Activated T-helper 2 cell treated with anti-CD3 and anti-CD28 coated beads, Interferon-gamma antibody, Interleukin-2, Interleukin-4, amounts not matched to agents 10 μg/mL and 5 μg/mL and 100 μg/mL, durations not matched to agents 14 hours and 24 hours and 36 hours (primary cell): ENCODE measurements at regions of chrX and their contacts with region 1.

Region 1: DNA sequence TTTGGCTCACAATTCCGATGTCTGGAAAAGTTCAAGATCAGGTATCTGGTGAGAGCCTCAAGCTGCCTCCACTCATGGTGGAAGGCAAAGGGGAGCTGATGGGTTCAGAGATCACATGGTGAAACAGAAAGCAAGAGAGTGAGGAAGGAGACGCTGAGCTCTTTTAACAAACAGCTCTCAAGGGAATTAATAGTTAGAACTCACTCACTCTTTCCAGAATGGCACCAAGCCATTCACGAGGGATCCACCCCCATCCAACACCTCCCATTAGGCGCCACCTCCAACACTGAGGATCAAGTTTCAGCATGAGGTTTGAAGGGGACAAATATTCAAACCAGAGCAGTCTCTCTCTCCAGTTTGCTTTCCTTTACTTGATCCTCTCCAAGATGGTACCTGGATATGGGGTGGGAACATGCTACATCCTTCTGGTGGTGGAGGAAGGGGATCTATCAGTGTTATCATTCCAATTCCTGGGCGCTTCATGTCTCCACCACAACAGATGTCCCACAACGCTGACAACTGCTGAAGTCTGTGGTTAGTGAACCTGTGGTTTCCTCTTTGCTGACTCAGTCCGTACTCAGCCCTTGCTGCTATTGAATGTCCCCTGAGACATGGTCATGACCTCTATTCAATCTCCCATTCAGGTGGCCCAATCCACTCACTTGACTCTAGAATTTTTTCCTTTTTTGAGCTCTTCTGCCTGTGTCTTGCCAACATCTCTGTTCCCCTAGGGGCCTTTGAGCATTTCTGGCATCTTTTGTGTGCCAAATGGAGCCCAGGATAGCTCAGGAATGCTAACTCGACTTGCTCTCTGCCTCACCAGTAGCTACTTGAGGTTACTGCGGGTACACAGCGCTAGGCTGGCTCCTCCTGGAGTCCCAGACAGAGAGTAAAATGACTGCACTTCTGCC is 395.2 kb downstream of the MID1IP1 start:
- DNase-seq: peak; percentile 60
- H3K4me3 Mint-ChIP-seq: peak overlapping the region; percentile 44
- H3K27ac Mint-ChIP-seq: peak overlapping the region; percentile 92
- H3K4me1 Mint-ChIP-seq: peaks cover 69% of the 10 kb centered on the region
- H3K27me3 Mint-ChIP-seq: no peaks in the 10 kb centered on the region

Region 2: DNA sequence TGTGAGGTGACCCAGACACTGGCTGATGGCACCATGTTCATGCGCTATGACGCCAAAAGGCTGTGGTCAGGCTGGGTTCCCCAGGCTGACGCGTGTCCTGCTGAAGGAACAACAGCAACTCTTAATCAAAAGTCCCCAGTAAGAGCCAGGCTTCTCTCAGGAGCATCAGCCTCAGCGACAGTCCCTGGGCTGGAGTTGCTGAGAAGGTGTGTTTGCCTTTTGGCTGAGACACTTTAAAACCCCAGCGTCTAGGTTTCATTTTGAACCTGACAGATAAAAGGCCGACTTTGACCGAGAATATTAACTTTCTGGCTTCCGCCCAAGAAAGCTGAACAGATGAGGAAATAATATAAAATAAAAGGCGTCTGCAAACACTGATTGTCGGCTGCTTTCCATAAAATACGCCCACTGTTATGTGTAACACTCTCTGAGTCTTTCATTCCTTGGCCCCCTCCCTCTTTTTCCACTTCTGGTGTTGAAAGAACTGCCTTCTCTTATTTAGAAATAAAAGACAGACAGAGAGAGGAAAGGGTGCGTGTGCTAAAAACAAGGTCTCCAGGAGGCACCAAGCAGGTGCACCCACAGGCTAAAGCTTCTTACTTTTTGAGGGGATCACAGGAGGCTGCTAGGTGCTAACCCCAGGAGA is 21.6 kb before region 1 on chrX:
- intact Hi-C with region 1: loop called (anchors 2 kb)
- DNase-seq: no peak
- H3K4me3 Mint-ChIP-seq: peak overlapping the region; percentile 44
- H3K27ac Mint-ChIP-seq: peak overlapping the region; percentile 90
- H3K4me1 Mint-ChIP-seq: peaks cover 46% of the 10 kb centered on the region
- H3K27me3 Mint-ChIP-seq: no peaks in the 10 kb centered on the region

Region 3: GRCh38 chrX:39212456-39212855 is 16.0 kb after region 1 on chrX:
- intact Hi-C with region 1: no loop called
- DNase-seq: no peak
- H3K4me3 Mint-ChIP-seq: no peak overlapping the region
- H3K27ac Mint-ChIP-seq: peak overlapping the region; percentile 17
- H3K4me1 Mint-ChIP-seq: peaks cover 5% of the 10 kb centered on the region
- H3K27me3 Mint-ChIP-seq: no peaks in the 10 kb centered on the region

Region 4: GRCh38 chrX:39381422-39381821 is 185.0 kb after region 1 on chrX:
- intact Hi-C with region 1: no loop called
- DNase-seq: no peak
- H3K4me3 Mint-ChIP-seq: no peak overlapping the region
- H3K27ac Mint-ChIP-seq: no peak overlapping the region
- H3K4me1 Mint-ChIP-seq: no peaks in the 10 kb centered on the region
- H3K27me3 Mint-ChIP-seq: no peaks in the 10 kb centered on the region

Region 5: GRCh38 chrX:40043895-40044294 is 847.4 kb after region 1 on chrX:
- intact Hi-C with region 1: no loop called
- DNase-seq: no peak
- H3K4me3 Mint-ChIP-seq: no peak overlapping the region
- H3K27ac Mint-ChIP-seq: no peak overlapping the region
- H3K4me1 Mint-ChIP-seq: peaks cover 19% of the 10 kb centered on the region
- H3K27me3 Mint-ChIP-seq: no peaks in the 10 kb centered on the region